ENCODE measurements at regions of chr2 and their contacts with region 1.

Region 1: GRCh38 chr2:218710687-218711549 is at the start of gene TTLL4:
- DNase-seq: peak; percentile 97 to 99 (median 98)
- H3K4me3 ChIP-seq: peak within 1 kb of the TSS; percentile 66 to 87 (median 85)
- H3K4me3 Mint-ChIP-seq: peak within 1 kb of the TSS; percentile 89 to 93
- H3K27ac ChIP-seq: peak within 1 kb of the TSS; percentile 88 to 98
- H3K27ac Mint-ChIP-seq: peak within 1 kb of the TSS; percentile 93 to 98 (median 96)
- H3K4me1 ChIP-seq: peaks cover 53 to 55% of the 10 kb centered on the region in 2 donors
- H3K4me1 Mint-ChIP-seq: peaks cover 41% of the 10 kb centered on the region
- H3K27me3 ChIP-seq: no peaks in the 10 kb centered on the region
- H3K27me3 Mint-ChIP-seq: peaks cover 0 to 7% (median 4%) of the 10 kb centered on the region in 3 donors
- CTCF ChIP-seq: peak; percentile 90
- polyA plus RNA-seq, gene TTLL4: 13.5 to 90.2 (median 16.3) TPM

Region 2: GRCh38 chr2:218727502-218728165 is 16.7 kb after region 1 on chr2:
- intact Hi-C with region 1: loop called in 1 of 2 experiments (anchors 2 kb)
- DNase-seq: peak; percentile 44 to 67 (median 61)
- H3K4me3 ChIP-seq: no peak overlapping the region
- H3K4me3 Mint-ChIP-seq: no peak overlapping the region
- H3K27ac ChIP-seq: no peak overlapping the region
- H3K27ac Mint-ChIP-seq: peak overlapping the region in 6 of 7 donors; percentile 38 to 90 (median 74)
- H3K4me1 ChIP-seq: peaks cover 43 to 46% of the 10 kb centered on the region in 2 donors
- H3K4me1 Mint-ChIP-seq: peaks cover 49% of the 10 kb centered on the region
- H3K27me3 ChIP-seq: no peaks in the 10 kb centered on the region
- H3K27me3 Mint-ChIP-seq: no peaks in the 10 kb centered on the region
- CTCF ChIP-seq: peak; percentile 80

Region 3: GRCh38 chr2:218761795-218762194 is 50.9 kb after region 1 on chr2:
- intact Hi-C with region 1: no loop called
- DNase-seq: no peak
- H3K4me3 ChIP-seq: no peak overlapping the region
- H3K4me3 Mint-ChIP-seq: no peak overlapping the region
- H3K27ac ChIP-seq: no peak overlapping the region
- H3K27ac Mint-ChIP-seq: no peak overlapping the region
- H3K4me1 ChIP-seq: peaks cover 5 to 6% of the 10 kb centered on the region in 2 donors
- H3K4me1 Mint-ChIP-seq: peaks cover 15% of the 10 kb centered on the region
- H3K27me3 ChIP-seq: no peaks in the 10 kb centered on the region
- H3K27me3 Mint-ChIP-seq: peaks cover 0 to 6% (median 1%) of the 10 kb centered on the region in 3 donors
- CTCF ChIP-seq: no peak

Region 4: GRCh38 chr2:218820746-218821369 is 109.9 kb after region 1 on chr2:
- intact Hi-C with region 1: no loop called
- DNase-seq: no peak
- H3K4me3 ChIP-seq: no peak overlapping the region
- H3K4me3 Mint-ChIP-seq: peak overlapping the region in 1 of 2 donors; percentile 19
- H3K27ac ChIP-seq: peak overlapping the region; percentile 53 to 68
- H3K27ac Mint-ChIP-seq: peak overlapping the region; percentile 81 to 96 (median 93)
- H3K4me1 ChIP-seq: peaks cover 22 to 25% of the 10 kb centered on the region in 2 donors
- H3K4me1 Mint-ChIP-seq: peaks cover 47% of the 10 kb centered on the region
- H3K27me3 ChIP-seq: peaks cover 0 to 2% of the 10 kb centered on the region in 2 donors
- H3K27me3 Mint-ChIP-seq: peaks cover 5 to 23% (median 11%) of the 10 kb centered on the region in 3 donors
- CTCF ChIP-seq: no peak